IMR-90 (cell line): ENCODE measurements at regions of chr10 and their contacts with region 1.

Region 1: DNA sequence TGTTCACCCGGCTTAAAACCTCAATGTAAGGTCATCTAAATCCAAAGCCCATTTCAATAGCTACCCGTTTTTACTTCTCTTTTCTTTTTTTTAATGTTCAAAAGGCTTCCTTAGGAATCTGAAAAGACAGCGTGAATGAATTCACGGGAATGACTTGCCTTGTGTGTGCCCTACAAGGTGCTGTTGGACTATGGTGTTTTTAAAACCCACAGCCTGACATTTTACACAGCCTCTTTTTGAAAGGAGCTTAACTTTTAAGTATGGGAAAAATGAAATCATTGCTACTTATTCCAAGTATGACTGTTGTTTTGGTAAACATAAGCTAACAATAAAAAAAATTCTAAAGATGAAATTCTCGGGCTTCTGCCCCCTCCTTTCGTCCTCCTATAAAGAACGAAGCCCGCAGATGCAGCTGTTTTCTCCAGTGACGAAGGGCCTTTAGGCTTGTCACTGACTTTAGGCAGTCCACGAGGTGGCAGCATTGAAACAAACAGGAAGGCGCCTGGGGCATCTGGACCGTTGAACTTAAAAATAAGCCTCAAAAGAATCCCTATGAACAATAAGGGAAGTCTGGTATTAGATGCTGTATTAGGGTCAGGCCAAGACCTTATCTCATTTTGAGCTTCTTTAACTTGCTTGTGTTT is 141.3 kb downstream of the NRP1 start:
- DNase-seq: peak; percentile 87
- ATAC-seq: peak; percentile 81
- H3K4me3 ChIP-seq: no peak overlapping the region
- H3K27ac ChIP-seq: no peak overlapping the region
- H3K4me1 ChIP-seq: peaks cover 18% of the 10 kb centered on the region
- H3K27me3 ChIP-seq: no peaks in the 10 kb centered on the region
- CTCF ChIP-seq: peak; percentile 77
- POLR2A ChIP-seq: no peak
- RAD21 ChIP-seq: peak; percentile 84

Region 2: GRCh38 chr10:33115738-33116719 is 77.2 kb before region 1 on chr10:
- CTCF ChIA-PET with region 1: no interaction called
- POLR2A ChIA-PET with region 1: no interaction called
- dilution Hi-C with region 1: no loop called
- in situ Hi-C with region 1: no loop called
- intact Hi-C with region 1: no loop called
- DNase-seq: peak; percentile 83
- ATAC-seq: peak; percentile 25
- H3K4me3 ChIP-seq: no peak overlapping the region
- H3K27ac ChIP-seq: peak overlapping the region; percentile 78
- H3K4me1 ChIP-seq: peaks cover 18% of the 10 kb centered on the region
- H3K27me3 ChIP-seq: no peaks in the 10 kb centered on the region
- CTCF ChIP-seq: peak; percentile 56
- POLR2A ChIP-seq: no peak
- RAD21 ChIP-seq: peak; percentile 54

Region 3: DNA sequence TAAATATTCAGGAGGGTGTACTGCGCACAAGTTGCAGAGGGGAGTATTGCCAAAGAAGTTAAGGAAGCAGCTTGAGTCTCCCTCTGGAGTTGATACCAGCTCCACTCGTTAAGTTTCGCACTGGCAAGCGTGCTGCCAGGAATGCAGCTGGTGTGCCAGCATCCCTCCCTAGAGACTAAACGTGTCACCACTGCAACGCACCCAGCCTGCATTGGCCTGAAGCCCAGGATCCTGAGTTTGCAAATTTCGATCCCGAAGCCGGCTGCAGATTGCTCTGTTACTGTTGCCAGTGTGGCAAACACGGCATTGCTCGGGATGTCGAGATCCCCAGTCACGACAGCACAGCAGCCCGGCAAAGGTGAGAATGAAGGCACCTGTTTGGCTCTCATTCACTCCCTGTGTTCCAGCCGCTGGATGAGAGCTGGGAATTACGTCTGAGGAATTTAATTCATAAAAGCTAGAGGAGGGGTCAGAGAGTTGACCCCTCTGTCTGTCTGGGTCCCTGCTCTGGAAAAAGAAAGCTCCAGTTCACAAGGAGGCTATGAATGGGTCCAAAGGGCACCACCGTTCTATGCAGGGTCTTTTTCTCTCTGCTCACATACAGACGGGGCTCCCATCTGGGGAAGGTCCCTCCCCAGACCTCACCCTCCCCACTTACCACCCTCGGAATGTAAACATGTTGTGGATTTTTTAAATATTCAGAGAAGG is 80.3 kb after region 1 on chr10:
- CTCF ChIA-PET with region 1: interaction called, 7 read pairs
- POLR2A ChIA-PET with region 1: no interaction called
- dilution Hi-C with region 1: no loop called
- in situ Hi-C with region 1: no loop called
- intact Hi-C with region 1: loop called (anchors 5 kb)
- DNase-seq: peak; percentile 96
- ATAC-seq: peak; percentile 79
- H3K4me3 ChIP-seq: peak overlapping the region; percentile 29
- H3K27ac ChIP-seq: peak overlapping the region; percentile 90
- H3K4me1 ChIP-seq: peaks cover 22% of the 10 kb centered on the region
- H3K27me3 ChIP-seq: no peaks in the 10 kb centered on the region
- CTCF ChIP-seq: peak; percentile 39
- POLR2A ChIP-seq: peak; percentile 80
- RAD21 ChIP-seq: peak; percentile 38; the same call in 1 of the 2 replicates

Region 4: GRCh38 chr10:33306701-33307512 is 113.7 kb after region 1 on chr10:
- CTCF ChIA-PET with region 1: interaction called, 5 read pairs
- POLR2A ChIA-PET with region 1: no interaction called
- dilution Hi-C with region 1: no loop called
- in situ Hi-C with region 1: no loop called
- intact Hi-C with region 1: loop called (anchors 5 kb)
- DNase-seq: peak; percentile 79
- ATAC-seq: peak; percentile 60
- H3K4me3 ChIP-seq: no peak overlapping the region
- H3K27ac ChIP-seq: peak overlapping the region; percentile 45; the same call in 1 of the 2 replicates
- H3K4me1 ChIP-seq: peaks cover 16% of the 10 kb centered on the region
- H3K27me3 ChIP-seq: no peaks in the 10 kb centered on the region
- CTCF ChIP-seq: no peak
- POLR2A ChIP-seq: no peak
- RAD21 ChIP-seq: no peak